Gastrocnemius medialis (tissue), 4 donors: ENCODE measurements at regions of chrX and their contacts with region 1.

Region 1: DNA sequence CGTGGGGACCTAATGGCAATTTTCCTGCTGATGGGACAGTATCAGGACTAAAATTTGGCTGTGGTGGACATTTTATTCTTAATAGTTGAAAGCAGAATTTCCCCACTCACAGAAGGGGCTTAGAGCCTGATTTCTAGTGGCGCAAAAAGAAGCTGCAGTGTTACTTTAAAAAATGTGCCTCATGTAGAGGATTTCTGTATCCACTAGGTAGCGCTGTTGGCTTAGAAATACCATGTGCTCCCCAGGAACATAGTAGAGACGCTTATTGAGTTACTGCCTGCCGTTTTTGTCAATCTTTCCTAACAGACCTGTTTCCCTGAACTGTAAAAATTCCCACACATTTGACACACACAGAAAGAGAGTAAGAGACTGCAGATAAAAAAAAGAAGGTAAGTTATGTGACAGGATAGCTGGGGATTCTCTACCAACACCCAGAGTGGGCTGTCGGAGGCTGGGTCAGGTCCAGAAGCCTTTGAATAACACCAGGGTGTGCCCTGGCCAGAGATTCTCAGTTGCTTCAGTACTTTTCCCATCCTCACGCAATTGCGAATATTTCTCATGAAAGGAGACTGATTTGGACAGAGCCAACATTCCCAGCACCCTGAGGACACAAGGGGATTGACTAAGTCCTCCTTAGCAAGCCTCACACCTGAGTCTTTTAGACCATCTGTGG is 88.4 kb downstream of the ZXDA start:
- DNase-seq: peak; percentile 12
- ATAC-seq: peak; percentile 86 to 96
- H3K4me3 ChIP-seq: peak overlapping the region; percentile 44 to 48 (median 45)
- H3K27ac ChIP-seq: peak overlapping the region in 3 of 4 donors; percentile 26 to 34 (median 32)
- H3K4me1 ChIP-seq: no peaks in the 10 kb centered on the region
- H3K27me3 ChIP-seq: peaks cover 0 to under 1% (median 0%) of the 10 kb centered on the region in 3 donors
- CTCF ChIP-seq: peak; percentile 65 to 74 (median 69)
- POLR2A ChIP-seq: no peak

Region 2: GRCh38 chrX:56813318-56813837 is 1008.5 kb before region 1 on chrX:
- in situ Hi-C with region 1: no loop called
- intact Hi-C with region 1: loop called (anchors 10 kb)
- DNase-seq: no peak
- ATAC-seq: no peak
- H3K4me3 ChIP-seq: no peak overlapping the region
- H3K27ac ChIP-seq: peak overlapping the region in 1 of 4 donors; percentile 9
- H3K4me1 ChIP-seq: no peaks in the 10 kb centered on the region
- H3K27me3 ChIP-seq: peaks cover 0 to 2% (median 0%) of the 10 kb centered on the region in 3 donors
- CTCF ChIP-seq: no peak
- POLR2A ChIP-seq: no peak

Region 3: DNA sequence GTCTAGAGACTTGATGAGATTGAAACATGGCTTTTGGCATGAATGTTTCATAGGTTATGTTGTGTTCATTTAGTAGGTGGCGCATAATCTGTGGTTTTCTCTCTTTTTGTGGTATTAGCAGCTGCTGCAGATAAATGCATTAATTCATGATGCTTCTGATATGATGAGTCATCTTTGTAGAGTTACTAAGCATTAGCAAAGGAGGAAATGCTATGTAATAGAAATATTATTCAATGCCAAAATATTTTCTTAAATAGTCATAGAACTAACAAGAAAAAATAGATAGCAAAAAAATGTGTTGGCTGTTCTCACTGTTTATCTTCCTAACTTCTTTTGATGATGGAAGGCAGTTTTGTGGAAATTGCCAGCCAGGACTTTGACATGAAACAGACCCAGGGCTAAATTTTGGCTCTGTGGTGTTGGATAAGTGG is 226.4 kb before region 1 on chrX:
- in situ Hi-C with region 1: loop called in 2 of 4 experiments (anchors 25 kb)
- intact Hi-C with region 1: no loop called
- DNase-seq: no peak
- ATAC-seq: no peak
- H3K4me3 ChIP-seq: peak overlapping the region; percentile 13 to 38 (median 20)
- H3K27ac ChIP-seq: peak overlapping the region; percentile 23 to 64 (median 50)
- H3K4me1 ChIP-seq: peaks cover 20 to 36% of the 10 kb centered on the region in 2 donors
- H3K27me3 ChIP-seq: no peaks in the 10 kb centered on the region
- CTCF ChIP-seq: no peak
- POLR2A ChIP-seq: no peak

Region 4: GRCh38 chrX:57929373-57929772 is 107.5 kb after region 1 on chrX:
- in situ Hi-C with region 1: loop called (anchors 10 to 25 kb)
- intact Hi-C with region 1: loop called (anchors 2 kb)
- DNase-seq: no peak
- ATAC-seq: peak in 1 of 2 donors; percentile 60
- H3K4me3 ChIP-seq: no peak overlapping the region
- H3K27ac ChIP-seq: no peak overlapping the region
- H3K4me1 ChIP-seq: peaks cover 0 to 8% of the 10 kb centered on the region in 2 donors
- H3K27me3 ChIP-seq: no peaks in the 10 kb centered on the region
- CTCF ChIP-seq: peak; percentile 9 to 59 (median 36)
- POLR2A ChIP-seq: no peak